ENCODE measurements at regions of chr2 and their contacts with region 1.

Region 1: DNA sequence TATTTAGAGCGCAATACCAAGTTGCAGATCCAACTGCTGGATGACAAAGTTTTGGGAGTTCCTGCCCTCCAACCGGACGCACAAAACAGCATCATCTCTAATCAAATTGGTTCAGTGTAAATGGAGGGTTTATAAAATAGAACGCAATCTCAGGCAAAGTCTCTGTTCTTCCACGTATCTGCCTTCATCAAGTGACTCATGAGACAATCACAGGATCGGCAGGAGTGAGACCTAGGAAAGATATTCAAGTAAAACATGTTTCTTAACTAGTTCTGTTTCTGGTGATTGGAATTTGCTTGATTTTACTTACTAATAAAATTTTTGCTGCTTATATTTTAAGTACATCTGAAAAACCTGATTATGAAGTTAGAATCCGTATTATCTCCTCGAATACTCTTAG is 7.6 kb downstream of the FZD5 start:
- DNase-seq: no peak
- ATAC-seq: no peak
- H3K4me3 ChIP-seq: no peak overlapping the region
- H3K27ac ChIP-seq: no peak overlapping the region
- H3K4me1 ChIP-seq: peaks cover 30% of the 10 kb centered on the region
- H3K27me3 ChIP-seq: no peaks in the 10 kb centered on the region
- CTCF ChIP-seq: no peak

Region 2: DNA sequence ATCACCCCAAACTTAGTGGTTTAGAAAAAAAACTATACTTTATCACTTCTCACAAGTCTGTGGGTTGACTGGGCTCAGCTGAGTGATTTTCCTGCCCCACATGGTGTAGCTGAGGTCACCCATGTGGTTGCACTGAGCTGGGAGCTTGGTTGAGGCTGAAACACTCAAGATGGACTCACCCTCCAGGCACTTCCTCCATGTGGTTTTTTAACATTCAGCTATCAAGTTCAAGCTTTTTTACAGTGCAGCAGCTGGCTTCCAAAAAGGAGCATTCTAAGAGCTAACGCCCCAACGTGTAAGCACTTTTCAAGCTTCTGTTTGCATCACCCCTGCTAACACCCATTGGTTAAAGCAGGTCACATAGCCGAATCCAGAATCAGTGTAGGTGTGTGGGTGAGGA is 338.3 kb before region 1 on chr2:
- intact Hi-C with region 1: no loop called
- DNase-seq: no peak
- ATAC-seq: no peak
- H3K4me3 ChIP-seq: no peak overlapping the region
- H3K27ac ChIP-seq: no peak overlapping the region
- H3K4me1 ChIP-seq: no peaks in the 10 kb centered on the region
- H3K27me3 ChIP-seq: no peaks in the 10 kb centered on the region
- CTCF ChIP-seq: no peak

Region 3: GRCh38 chr2:207805566-207806226 is 43.5 kb after region 1 on chr2:
- intact Hi-C with region 1: no loop called
- DNase-seq: no peak
- ATAC-seq: no peak
- H3K4me3 ChIP-seq: no peak overlapping the region
- H3K27ac ChIP-seq: no peak overlapping the region
- H3K4me1 ChIP-seq: no peaks in the 10 kb centered on the region
- H3K27me3 ChIP-seq: no peaks in the 10 kb centered on the region
- CTCF ChIP-seq: no peak

Region 4: DNA sequence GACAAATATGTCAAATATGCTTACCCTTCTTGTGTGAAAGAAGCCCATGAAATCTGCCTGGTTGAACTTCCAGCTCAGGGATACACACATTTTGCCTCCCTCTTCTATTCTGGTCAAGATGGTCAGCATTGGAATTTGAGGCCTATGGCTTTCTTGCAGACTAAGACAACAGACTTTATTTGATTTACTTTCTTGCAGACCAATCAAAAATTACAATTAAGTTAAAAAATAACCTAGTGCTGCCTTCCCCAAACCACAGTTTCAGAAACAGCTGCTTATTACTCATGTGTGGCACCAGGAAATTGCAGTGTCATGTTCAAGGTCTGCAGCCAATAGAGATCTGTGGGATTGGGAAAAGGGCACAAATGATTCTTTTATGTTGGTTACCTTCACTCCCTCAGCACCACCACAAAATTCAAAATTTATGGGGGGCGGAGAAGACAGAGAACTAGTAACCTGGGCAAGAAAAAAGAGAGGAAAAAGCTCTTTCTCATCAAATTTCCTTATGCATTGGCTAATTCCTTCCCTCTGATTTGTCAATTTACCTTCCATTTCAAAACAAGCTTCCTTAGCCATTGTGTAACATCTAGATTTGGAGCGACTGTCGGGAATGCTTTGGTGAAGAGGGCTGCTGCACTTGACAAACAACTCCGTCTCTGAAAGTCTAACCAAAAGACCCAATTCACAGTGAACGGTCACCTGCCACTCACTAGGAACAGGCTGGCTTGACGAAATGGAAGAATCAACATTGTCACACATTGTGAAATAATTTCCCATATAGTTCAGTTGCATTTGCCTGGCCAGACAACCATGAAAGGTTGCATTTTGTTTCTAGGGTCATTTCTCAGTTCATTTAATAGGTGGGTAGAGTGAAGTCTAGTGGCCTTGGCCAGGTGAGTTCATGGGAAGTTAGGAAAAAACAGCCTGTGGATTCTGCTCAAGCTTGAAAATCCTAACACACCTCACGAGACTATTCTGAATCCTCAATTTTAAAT is 107.9 kb after region 1 on chr2:
- intact Hi-C with region 1: no loop called
- DNase-seq: no peak
- ATAC-seq: peak in 1 of 4 donors; percentile 53
- H3K4me3 ChIP-seq: no peak overlapping the region
- H3K27ac ChIP-seq: peak overlapping the region; percentile 11
- H3K4me1 ChIP-seq: peaks cover 13% of the 10 kb centered on the region
- H3K27me3 ChIP-seq: no peaks in the 10 kb centered on the region
- CTCF ChIP-seq: no peak

Region 5: GRCh38 chr2:208046686-208047085 is 284.5 kb after region 1 on chr2:
- intact Hi-C with region 1: loop called in 1 of 2 experiments (anchors 5 kb)
- DNase-seq: no peak
- ATAC-seq: no peak
- H3K4me3 ChIP-seq: no peak overlapping the region
- H3K27ac ChIP-seq: no peak overlapping the region
- H3K4me1 ChIP-seq: no peaks in the 10 kb centered on the region
- H3K27me3 ChIP-seq: no peaks in the 10 kb centered on the region
- CTCF ChIP-seq: no peak

Region 6: GRCh38 chr2:208128136-208128535 is 366.0 kb after region 1 on chr2:
- intact Hi-C with region 1: no loop called
- DNase-seq: no peak
- ATAC-seq: no peak
- H3K4me3 ChIP-seq: no peak overlapping the region
- H3K27ac ChIP-seq: no peak overlapping the region
- H3K4me1 ChIP-seq: no peaks in the 10 kb centered on the region
- H3K27me3 ChIP-seq: peaks cover 0 to 29% (median 0%) of the 10 kb centered on the region in 3 donors
- CTCF ChIP-seq: no peak

Measured in psoas muscle (tissue), 8 donors.